ENCODE measurements at regions of chr5 and their contacts with region 1.

Region 1: GRCh38 chr5:145772464-145772863 is 62.7 kb downstream of the PRELID2 start:
- DNase-seq: no peak
- H3K4me3 ChIP-seq: no peak overlapping the region
- H3K27ac ChIP-seq: no peak overlapping the region
- H3K27me3 ChIP-seq: no peaks in the 10 kb centered on the region
- CTCF ChIP-seq: no peak

Region 2: GRCh38 chr5:145260670-145261069 is 511.8 kb before region 1 on chr5:
- CTCF ChIA-PET with region 1: interaction called, 11 read pairs
- POLR2A ChIA-PET with region 1: no interaction called
- DNase-seq: no peak
- H3K4me3 ChIP-seq: no peak overlapping the region
- H3K27ac ChIP-seq: no peak overlapping the region
- H3K27me3 ChIP-seq: no peaks in the 10 kb centered on the region
- CTCF ChIP-seq: no peak